CD8-positive, alpha-beta T cell (primary cell): ENCODE measurements at regions of chr21 and their contacts with region 1.

Region 1: DNA sequence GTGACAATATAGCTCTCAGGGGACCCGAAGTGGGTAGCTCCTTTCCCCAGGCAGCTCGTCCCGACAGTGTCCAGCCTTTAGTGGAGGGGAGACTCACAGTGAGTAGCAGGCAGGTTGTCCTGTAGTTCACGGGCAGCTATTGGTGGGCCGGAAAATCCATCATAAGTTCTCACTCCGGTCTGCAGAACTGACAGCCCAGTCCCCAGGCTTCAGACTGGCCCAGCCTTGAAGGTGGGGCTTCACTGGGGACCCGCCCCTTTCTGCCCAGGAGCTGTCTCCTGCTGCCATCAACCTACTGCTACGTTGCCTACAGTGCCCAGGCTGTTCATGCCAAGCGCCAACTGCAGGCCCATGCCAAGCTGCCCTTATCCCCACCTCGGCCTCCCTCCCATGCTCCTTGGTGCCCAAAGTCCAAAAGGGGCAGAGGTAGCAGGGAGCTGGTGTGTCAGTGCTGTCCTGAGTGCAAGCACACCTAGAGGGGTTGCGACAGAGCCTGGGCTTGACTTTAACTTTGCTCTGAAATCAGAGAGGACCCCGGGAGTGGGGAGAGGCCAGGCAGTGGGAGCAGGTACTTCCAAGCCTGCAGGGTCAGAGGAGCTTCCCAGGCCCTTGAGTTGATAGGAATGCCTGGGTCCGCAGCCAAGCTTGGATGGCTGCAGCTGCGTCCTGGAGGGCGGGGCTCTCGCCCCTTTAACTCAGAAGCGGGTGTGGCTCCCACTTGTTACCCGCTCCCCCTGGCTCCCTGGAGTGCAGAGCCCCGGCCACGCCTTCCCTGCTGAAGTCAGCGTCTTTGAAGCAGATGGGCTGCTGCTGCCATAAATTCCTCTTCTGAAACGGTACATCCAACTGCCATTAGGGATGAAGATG is 1144.3 kb upstream of the NCAM2 start:
- DNase-seq: peak in 1 of 9 experiments; percentile 1
- ATAC-seq: no peak
- H3K4me3 ChIP-seq: no peak overlapping the region
- H3K4me3 Mint-ChIP-seq: no peak overlapping the region
- H3K27ac ChIP-seq: no peak overlapping the region
- H3K27ac Mint-ChIP-seq: no peak overlapping the region
- H3K4me1 ChIP-seq: no peaks in the 10 kb centered on the region
- H3K4me1 Mint-ChIP-seq: no peaks in the 10 kb centered on the region
- H3K27me3 ChIP-seq: no peaks in the 10 kb centered on the region
- H3K27me3 Mint-ChIP-seq: no peaks in the 10 kb centered on the region
- CTCF ChIP-seq: no peak

Region 2: DNA sequence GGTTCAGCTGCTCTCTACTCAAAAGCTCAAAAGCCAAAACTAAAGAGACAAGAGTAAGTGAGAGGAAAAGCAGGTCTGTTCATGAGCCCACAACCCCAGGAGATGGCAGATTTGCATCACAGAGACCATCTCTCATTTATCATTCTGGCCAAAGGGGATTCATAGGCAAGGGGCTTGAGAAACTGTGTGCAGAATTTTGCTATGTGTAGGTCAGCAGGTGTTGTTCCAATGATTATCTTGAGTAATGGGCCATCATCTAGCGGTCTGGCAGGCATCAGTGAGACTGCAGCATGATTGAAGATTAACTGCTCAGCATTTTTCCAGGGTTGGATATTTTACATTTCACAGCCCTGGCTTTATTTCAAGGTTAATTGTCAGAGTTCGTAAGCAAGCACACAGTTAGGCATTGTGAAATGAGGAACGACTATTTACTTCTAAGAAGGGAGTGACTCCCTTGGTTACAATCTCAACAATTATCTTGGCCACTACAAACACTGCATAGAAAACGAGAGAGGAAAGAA is 245.8 kb before region 1 on chr21:
- CTCF ChIA-PET with region 1: no interaction called
- POLR2A ChIA-PET with region 1: no interaction called
- intact Hi-C with region 1: no loop called
- DNase-seq: no peak
- ATAC-seq: no peak
- H3K4me3 ChIP-seq: no peak overlapping the region
- H3K4me3 Mint-ChIP-seq: no peak overlapping the region
- H3K27ac ChIP-seq: no peak overlapping the region
- H3K27ac Mint-ChIP-seq: no peak overlapping the region
- H3K4me1 ChIP-seq: no peaks in the 10 kb centered on the region
- H3K4me1 Mint-ChIP-seq: no peaks in the 10 kb centered on the region
- H3K27me3 ChIP-seq: no peaks in the 10 kb centered on the region
- H3K27me3 Mint-ChIP-seq: no peaks in the 10 kb centered on the region
- CTCF ChIP-seq: no peak

Region 3: GRCh38 chr21:19878133-19878532 is 24.2 kb after region 1 on chr21:
- CTCF ChIA-PET with region 1: no interaction called
- POLR2A ChIA-PET with region 1: no interaction called
- intact Hi-C with region 1: loop called in 1 of 2 experiments (anchors 2 kb)
- DNase-seq: no peak
- ATAC-seq: no peak
- H3K4me3 ChIP-seq: no peak overlapping the region
- H3K4me3 Mint-ChIP-seq: no peak overlapping the region
- H3K27ac ChIP-seq: no peak overlapping the region
- H3K27ac Mint-ChIP-seq: no peak overlapping the region
- H3K4me1 ChIP-seq: no peaks in the 10 kb centered on the region
- H3K4me1 Mint-ChIP-seq: no peaks in the 10 kb centered on the region
- H3K27me3 ChIP-seq: no peaks in the 10 kb centered on the region
- H3K27me3 Mint-ChIP-seq: no peaks in the 10 kb centered on the region
- CTCF ChIP-seq: no peak

Region 4: GRCh38 chr21:19914028-19914427 is 60.1 kb after region 1 on chr21:
- CTCF ChIA-PET with region 1: no interaction called
- POLR2A ChIA-PET with region 1: no interaction called
- intact Hi-C with region 1: loop called in 1 of 2 experiments (anchors 10 kb)
- DNase-seq: no peak
- ATAC-seq: no peak
- H3K4me3 ChIP-seq: no peak overlapping the region
- H3K4me3 Mint-ChIP-seq: no peak overlapping the region
- H3K27ac ChIP-seq: no peak overlapping the region
- H3K27ac Mint-ChIP-seq: no peak overlapping the region
- H3K4me1 ChIP-seq: no peaks in the 10 kb centered on the region
- H3K4me1 Mint-ChIP-seq: no peaks in the 10 kb centered on the region
- H3K27me3 ChIP-seq: no peaks in the 10 kb centered on the region
- H3K27me3 Mint-ChIP-seq: no peaks in the 10 kb centered on the region
- CTCF ChIP-seq: no peak